ENCODE measurements at regions of chr6 and their contacts with region 1.

Region 1: DNA sequence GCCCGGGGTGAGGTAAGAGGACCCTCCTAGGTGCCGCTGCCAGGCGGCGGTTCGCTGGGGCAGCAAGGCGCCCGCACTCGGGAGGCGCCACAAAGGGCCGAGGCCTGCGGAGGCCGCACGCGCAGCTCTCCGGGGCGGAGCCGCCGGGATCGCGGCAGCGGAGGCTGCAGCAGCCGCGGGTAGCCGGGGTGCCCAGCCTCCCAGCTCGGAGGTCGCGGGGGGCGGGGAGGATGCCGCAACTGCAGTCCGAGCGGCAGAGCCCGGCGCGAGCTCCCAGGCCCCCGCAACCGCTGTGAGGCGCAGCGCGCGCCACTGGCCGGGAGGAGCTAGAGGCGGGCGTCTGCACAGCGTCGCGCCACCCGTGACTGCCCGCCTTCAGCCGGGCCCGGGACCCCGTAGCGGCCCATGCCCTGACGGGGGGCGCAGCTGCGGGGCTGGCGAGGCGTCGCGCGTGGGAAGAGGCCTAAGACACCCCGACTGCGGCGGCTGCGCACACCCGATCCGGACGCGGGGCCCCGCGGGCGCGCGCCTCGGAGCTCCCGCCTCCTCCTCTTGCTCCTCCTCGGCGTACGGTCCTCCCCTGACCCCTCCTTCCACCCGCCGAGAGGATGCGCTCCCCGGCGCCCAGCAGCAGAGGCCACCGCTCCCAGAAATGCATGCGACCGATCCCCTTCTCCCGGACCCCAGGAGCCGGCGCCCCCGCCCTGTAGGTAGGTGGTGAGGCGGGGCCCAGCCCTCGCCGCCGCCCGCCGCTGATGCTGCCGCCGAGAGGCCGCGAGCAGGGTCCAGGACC is at the start of gene NCOA7:
- DNase-seq: no peak
- ATAC-seq: peak; percentile 89
- H3K4me3 ChIP-seq: peak within 1 kb of the TSS; percentile 78 to 80
- H3K27ac ChIP-seq: peak within 1 kb of the TSS; percentile 75
- H3K4me1 ChIP-seq: peaks cover 20 to 25% of the 10 kb centered on the region in 2 experiments; a peak in 3 of 4 replicates
- H3K27me3 ChIP-seq: no peaks in the 10 kb centered on the region
- CTCF ChIP-seq: no peak
- POLR2A ChIP-seq: peak; percentile 52
- RAD21 ChIP-seq: no peak
- total RNA-seq, gene NCOA7: 13.8 TPM

Region 2: DNA sequence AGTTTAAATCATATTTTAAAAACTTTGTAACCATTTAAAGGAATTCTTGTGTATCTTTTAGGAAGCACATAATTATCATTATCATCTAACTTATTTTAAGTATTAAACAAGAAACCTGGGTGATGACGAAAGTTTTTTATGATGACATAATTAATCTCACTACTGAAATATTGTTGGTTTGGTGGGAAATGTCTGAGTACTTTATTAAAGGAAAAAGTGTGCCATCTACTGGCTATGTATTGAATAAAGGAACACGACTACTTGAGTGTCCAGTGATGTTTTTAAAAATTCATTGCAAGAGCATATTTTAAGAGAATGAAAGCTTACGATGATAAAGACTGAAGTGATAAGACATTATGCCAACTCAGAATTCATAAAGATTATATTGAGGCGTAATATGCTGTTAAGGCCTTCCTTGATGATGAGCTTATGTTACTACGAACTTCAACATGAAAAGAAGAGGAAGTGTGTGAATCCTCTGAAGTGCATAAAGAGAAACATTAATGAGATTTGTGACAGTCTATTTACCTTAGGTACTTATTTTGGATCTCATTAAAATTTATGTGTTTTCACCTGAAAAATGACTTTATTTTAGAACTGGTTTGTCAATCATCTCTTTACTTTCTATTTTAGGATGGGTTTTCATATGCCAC is 183.8 kb after region 1 on chr6:
- CTCF ChIA-PET with region 1: interaction called, 18 read pairs
- POLR2A ChIA-PET with region 1: no interaction called
- RAD21 ChIA-PET with region 1: no interaction called
- intact Hi-C with region 1: loop called (anchors 2 kb)
- DNase-seq: peak; percentile 46
- ATAC-seq: peak; percentile 77
- H3K4me3 ChIP-seq: no peak overlapping the region
- H3K27ac ChIP-seq: no peak overlapping the region
- H3K4me1 ChIP-seq: no peaks in the 10 kb centered on the region
- H3K27me3 ChIP-seq: no peaks in the 10 kb centered on the region
- CTCF ChIP-seq: peak; percentile 35 to 67 (median 52); a peak in 5 of 6 replicates
- POLR2A ChIP-seq: no peak
- RAD21 ChIP-seq: peak; percentile 71

Region 3: GRCh38 chr6:125986300-125987025 is 195.9 kb after region 1 on chr6 and contains the start of gene TRMT11:
- CTCF ChIA-PET with region 1: interaction called, 3 read pairs
- POLR2A ChIA-PET with region 1: interaction called, 14 read pairs
- RAD21 ChIA-PET with region 1: no interaction called
- intact Hi-C with region 1: no loop called
- DNase-seq: peak; percentile 84
- ATAC-seq: peak; percentile 96
- H3K4me3 ChIP-seq: peak within 1 kb of the TSS; percentile 77 to 90
- H3K27ac ChIP-seq: peak within 1 kb of the TSS; percentile 81
- H3K4me1 ChIP-seq: peaks cover 7 to 39% of the 10 kb centered on the region in 2 experiments
- H3K27me3 ChIP-seq: no peaks in the 10 kb centered on the region
- CTCF ChIP-seq: 0 out of 6 replicates have a peak, but pooled peaks of 1 of the 3 experiments have one; percentile 9
- POLR2A ChIP-seq: peak; percentile 91
- RAD21 ChIP-seq: no peak
- total RNA-seq, gene TRMT11: 41.8 TPM

Region 4: DNA sequence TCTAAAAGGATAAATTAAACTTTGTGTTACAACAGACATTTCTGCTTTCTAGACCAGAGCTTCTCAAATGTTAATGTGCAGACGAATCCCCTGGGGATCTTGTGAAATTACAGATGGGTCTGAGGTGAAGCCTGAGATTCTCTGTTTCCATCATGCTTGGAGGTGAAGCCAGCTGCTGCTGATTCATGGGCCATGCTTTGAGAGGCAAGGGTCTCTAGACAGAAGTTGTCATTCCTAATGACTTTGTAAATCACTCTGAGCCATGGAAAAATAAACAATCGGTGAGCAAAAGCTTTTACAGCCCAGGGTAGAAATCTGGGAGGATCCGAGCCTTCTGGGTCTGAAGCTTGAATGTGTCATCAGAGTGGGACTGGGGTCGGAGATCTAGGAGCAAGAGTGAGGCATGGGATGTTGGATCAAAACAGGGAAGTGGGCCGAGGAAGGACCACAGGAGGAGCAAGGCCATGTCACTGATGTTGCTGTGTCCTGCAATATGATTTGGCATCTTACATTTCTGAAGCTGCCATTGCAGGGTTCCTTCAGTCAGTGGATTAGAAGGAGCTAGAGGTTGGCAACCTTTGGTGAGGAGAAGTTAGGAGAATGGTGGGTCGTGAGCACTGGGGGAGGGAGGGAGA is 273.1 kb after region 1 on chr6:
- CTCF ChIA-PET with region 1: no interaction called
- POLR2A ChIA-PET with region 1: no interaction called
- RAD21 ChIA-PET with region 1: no interaction called
- intact Hi-C with region 1: no loop called
- DNase-seq: no peak
- ATAC-seq: no peak
- H3K4me3 ChIP-seq: no peak overlapping the region
- H3K27ac ChIP-seq: no peak overlapping the region
- H3K4me1 ChIP-seq: no peaks in the 10 kb centered on the region
- H3K27me3 ChIP-seq: no peaks in the 10 kb centered on the region
- CTCF ChIP-seq: no peak
- POLR2A ChIP-seq: no peak
- RAD21 ChIP-seq: no peak

Measured in HCT116 (cell line).